Aorta (tissue), 5 donors: ENCODE measurements at regions of chr5 and their contacts with region 1.

Region 1: GRCh38 chr5:137498736-137499505 is at the start of gene SPOCK1:
- DNase-seq: peak; percentile 72 to 92
- ATAC-seq: peak; percentile 95
- H3K4me3 ChIP-seq: peak within 1 kb of the TSS; percentile 45 to 73
- H3K27ac ChIP-seq: no peak within 1 kb of the TSS
- H3K4me1 ChIP-seq: no peaks in the 10 kb centered on the region
- H3K27me3 ChIP-seq: no peaks in the 10 kb centered on the region
- total RNA-seq, gene SPOCK1: 48.5 to 67.8 TPM

Region 2: GRCh38 chr5:136802383-136802782 is 696.5 kb before region 1 on chr5:
- intact Hi-C with region 1: loop called in 1 of 2 experiments (anchors 5 kb)
- DNase-seq: no peak
- ATAC-seq: no peak
- H3K4me3 ChIP-seq: no peak overlapping the region
- H3K27ac ChIP-seq: no peak overlapping the region
- H3K4me1 ChIP-seq: no peaks in the 10 kb centered on the region
- H3K27me3 ChIP-seq: no peaks in the 10 kb centered on the region

Region 3: GRCh38 chr5:137091472-137091871 is 407.4 kb before region 1 on chr5:
- intact Hi-C with region 1: no loop called
- DNase-seq: no peak
- ATAC-seq: no peak
- H3K4me3 ChIP-seq: no peak overlapping the region
- H3K27ac ChIP-seq: no peak overlapping the region
- H3K4me1 ChIP-seq: no peaks in the 10 kb centered on the region
- H3K27me3 ChIP-seq: no peaks in the 10 kb centered on the region

Region 4: GRCh38 chr5:137320056-137321045 is 178.6 kb before region 1 on chr5:
- intact Hi-C with region 1: loop called (anchors 1 to 5 kb)
- DNase-seq: no peak
- ATAC-seq: peak; percentile 80
- H3K4me3 ChIP-seq: no peak overlapping the region
- H3K27ac ChIP-seq: no peak overlapping the region
- H3K4me1 ChIP-seq: peaks cover 0 to 4% of the 10 kb centered on the region in 2 donors
- H3K27me3 ChIP-seq: no peaks in the 10 kb centered on the region

Region 5: DNA sequence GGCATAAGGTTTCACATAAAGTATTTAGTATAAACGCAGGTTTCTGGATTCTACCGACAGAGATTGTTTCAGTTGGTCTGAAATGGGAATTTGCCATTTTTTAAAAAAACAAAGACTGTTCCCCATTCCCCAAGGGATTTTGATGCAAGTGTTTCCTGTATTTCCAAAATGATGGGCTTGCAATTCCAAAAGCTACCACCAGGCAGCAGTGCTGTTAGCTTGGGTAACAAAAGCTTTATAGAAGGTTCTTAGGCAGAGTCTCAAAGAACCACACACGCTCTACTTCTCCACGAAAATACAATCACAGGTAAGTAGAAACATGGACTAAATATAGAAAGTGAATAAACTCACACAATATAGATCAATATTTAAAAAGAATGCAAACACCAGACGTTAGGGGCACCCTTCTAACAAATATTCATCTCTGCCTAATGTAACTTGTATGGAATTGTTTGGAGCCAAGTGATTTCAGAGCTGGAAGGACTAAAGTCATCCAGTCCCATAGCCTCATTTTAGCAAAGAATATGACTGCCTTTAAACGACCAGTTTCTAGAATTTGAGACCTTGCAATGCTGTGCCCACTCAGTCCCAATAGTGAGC is 154.1 kb before region 1 on chr5:
- intact Hi-C with region 1: loop called in 1 of 2 experiments (anchors 5 kb)
- DNase-seq: no peak
- ATAC-seq: no peak
- H3K4me3 ChIP-seq: no peak overlapping the region
- H3K27ac ChIP-seq: no peak overlapping the region
- H3K4me1 ChIP-seq: no peaks in the 10 kb centered on the region
- H3K27me3 ChIP-seq: no peaks in the 10 kb centered on the region

Region 6: DNA sequence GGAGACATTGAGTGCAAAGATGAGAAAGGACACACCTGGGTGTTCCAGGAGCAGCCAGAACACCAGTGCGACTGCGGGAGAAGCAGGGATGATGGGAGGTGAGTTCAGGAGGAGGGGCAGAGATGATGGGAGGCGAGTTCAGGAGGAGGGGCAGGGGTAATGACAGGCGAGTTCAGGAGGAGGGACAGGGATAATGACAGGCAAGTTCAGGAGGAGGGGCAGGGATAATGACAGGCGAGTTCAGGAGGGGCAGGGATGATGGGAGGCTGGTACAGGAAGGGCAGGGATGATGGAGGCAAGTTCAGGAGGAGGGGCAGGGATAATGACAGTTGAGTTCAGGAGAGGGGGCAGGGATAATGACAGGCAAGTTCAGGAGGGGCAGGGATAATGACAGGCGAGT is 17.4 kb after region 1 on chr5:
- intact Hi-C with region 1: no loop called
- DNase-seq: no peak
- ATAC-seq: no peak
- H3K4me3 ChIP-seq: no peak overlapping the region
- H3K27ac ChIP-seq: no peak overlapping the region
- H3K4me1 ChIP-seq: peaks cover 0 to 4% of the 10 kb centered on the region in 2 donors
- H3K27me3 ChIP-seq: no peaks in the 10 kb centered on the region